GM23248 (cell line): ENCODE measurements at regions of chr13 and their contacts with region 1.

Region 1: DNA sequence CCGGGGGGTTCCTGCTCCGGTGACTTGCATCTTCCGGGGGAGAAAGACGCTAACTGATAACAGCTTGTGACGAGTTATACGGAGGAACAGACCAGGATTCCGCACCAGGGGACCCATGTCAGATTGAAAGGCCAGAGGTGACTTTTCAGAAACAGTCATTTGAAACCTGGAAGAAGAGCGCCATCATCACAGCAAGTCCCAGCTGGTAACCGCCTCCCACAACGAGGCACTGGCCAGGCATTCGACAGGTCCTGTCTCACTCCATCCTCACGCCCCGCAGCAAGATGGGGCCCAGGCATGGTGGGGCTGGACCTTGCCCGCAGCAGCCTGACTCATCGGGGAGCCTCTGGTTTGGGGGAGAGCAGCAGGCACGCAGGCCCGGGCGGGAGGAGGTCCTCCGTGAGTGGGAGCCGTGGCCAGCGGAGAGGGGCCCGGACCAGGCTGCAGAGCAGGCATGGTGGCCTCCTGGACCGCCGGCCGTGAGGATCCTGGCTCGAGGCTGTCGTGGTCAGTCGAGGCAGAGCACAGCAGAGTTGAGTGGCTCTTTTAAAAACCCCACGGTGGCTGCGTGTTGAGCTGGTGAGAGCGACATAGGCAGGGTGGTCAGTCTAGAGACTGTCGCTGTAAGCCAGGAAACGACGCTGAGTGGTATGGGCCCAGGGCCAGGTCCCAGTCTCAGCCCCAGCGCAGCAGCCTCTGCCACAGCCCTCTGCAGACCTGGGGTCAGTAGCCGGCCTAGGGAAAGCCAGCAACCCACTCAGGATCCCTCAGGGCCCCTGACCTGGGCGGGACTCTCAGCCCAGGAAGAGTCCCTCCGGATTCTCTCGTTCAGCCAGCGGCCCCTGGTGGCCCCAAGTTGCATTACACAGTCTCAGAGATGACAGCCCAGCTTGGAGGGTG is 94.9 kb upstream of the MCF2L start:
- DNase-seq: peak; percentile 76
- H3K4me3 ChIP-seq: peak overlapping the region; percentile 46; the same call in 1 of the 2 replicates
- H3K27ac ChIP-seq: no peak overlapping the region
- H3K4me1 ChIP-seq: no peaks in the 10 kb centered on the region
- H3K27me3 ChIP-seq: no peaks in the 10 kb centered on the region

Region 2: DNA sequence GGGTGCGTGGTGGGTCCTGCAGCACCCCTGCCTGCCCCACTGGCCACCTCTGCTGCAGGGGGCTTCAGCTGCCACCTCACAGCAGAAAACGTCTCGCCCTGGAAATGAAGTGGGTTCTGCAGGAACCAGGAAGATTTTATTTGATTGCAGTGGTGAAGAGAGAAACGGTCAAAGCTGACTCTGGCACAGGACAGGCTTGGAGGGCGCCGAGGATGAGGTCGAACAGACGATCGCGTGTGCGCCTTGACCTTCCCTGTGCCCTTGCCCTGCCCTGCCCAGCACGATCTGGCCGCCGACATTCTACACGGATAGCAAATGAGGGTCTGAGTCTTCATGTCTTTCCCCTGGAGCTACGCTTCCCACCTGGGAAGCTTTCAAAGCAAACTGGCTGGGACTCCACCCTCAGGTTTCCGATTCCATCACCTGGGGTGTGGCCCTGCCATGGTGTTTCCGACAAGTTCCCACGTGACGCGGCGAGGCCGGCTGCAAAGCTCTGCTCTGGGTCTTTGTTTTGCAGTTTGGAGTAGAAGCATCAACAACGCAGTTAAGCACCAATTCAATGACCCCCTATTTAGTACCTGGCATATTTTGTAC is 235.8 kb before region 1 on chr13:
- in situ Hi-C with region 1: loop called (anchors 25 kb)
- DNase-seq: no peak
- H3K4me3 ChIP-seq: no peak overlapping the region
- H3K27ac ChIP-seq: no peak overlapping the region
- H3K4me1 ChIP-seq: no peaks in the 10 kb centered on the region
- H3K27me3 ChIP-seq: peaks cover 48% of the 10 kb centered on the region

Region 3: GRCh38 chr13:113315992-113316391 is 441.9 kb after region 1 on chr13:
- in situ Hi-C with region 1: no loop called
- DNase-seq: no peak
- H3K4me3 ChIP-seq: no peak overlapping the region
- H3K27ac ChIP-seq: no peak overlapping the region
- H3K4me1 ChIP-seq: no peaks in the 10 kb centered on the region
- H3K27me3 ChIP-seq: no peaks in the 10 kb centered on the region

Region 4: GRCh38 chr13:113327766-113328471 is 453.8 kb after region 1 on chr13:
- in situ Hi-C with region 1: no loop called
- DNase-seq: no peak
- H3K4me3 ChIP-seq: no peak overlapping the region
- H3K27ac ChIP-seq: no peak overlapping the region
- H3K4me1 ChIP-seq: no peaks in the 10 kb centered on the region
- H3K27me3 ChIP-seq: no peaks in the 10 kb centered on the region

Region 5: GRCh38 chr13:113816946-113817859 is 943.1 kb after region 1 on chr13:
- in situ Hi-C with region 1: no loop called
- DNase-seq: peak; percentile 97
- H3K4me3 ChIP-seq: no peak overlapping the region
- H3K27ac ChIP-seq: peak overlapping the region; percentile 62
- H3K4me1 ChIP-seq: peaks cover 40% of the 10 kb centered on the region
- H3K27me3 ChIP-seq: no peaks in the 10 kb centered on the region